Calu3 (cell line): ENCODE measurements at regions of chr2 and their contacts with region 1.

Region 1: GRCh38 chr2:207769597-207770486 is at the start of gene FZD5:
- DNase-seq: peak; percentile 99
- H3K4me3 Mint-ChIP-seq: peak within 1 kb of the TSS; percentile 82
- H3K27ac Mint-ChIP-seq: peak within 1 kb of the TSS; percentile 83
- H3K4me1 Mint-ChIP-seq: peaks cover 37% of the 10 kb centered on the region
- H3K27me3 Mint-ChIP-seq: no peaks in the 10 kb centered on the region
- CTCF ChIP-seq: peak; percentile 80
- total RNA-seq, gene FZD5: 20.4 and 22.2 TPM in 2 replicates

Region 2: DNA sequence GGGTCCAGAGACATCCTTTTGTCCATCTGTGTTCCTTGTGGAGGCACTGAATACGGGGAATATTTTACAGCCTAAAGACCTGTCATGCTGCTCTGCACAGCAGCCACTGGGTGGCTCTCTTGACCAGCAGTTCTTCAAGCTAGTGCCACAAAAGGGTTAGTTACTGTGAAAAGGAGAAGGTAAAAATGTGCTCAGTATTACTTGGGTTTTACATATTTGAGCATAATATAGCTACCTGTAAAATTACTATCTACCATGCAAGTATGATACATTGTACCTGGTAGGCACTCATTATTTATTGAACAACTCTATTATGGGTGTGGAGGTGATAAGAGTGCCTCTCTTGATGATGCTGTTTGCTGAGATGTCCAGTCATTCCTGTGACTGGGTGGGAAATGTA is 23.7 kb before region 1 on chr2:
- CTCF ChIA-PET with region 1: interaction called, 12 read pairs
- intact Hi-C with region 1: no loop called
- DNase-seq: peak; percentile 59
- H3K4me3 Mint-ChIP-seq: no peak overlapping the region
- H3K27ac Mint-ChIP-seq: no peak overlapping the region
- H3K4me1 Mint-ChIP-seq: no peaks in the 10 kb centered on the region
- H3K27me3 Mint-ChIP-seq: no peaks in the 10 kb centered on the region
- CTCF ChIP-seq: peak; percentile 75

Region 3: GRCh38 chr2:207836521-207837133 is 66.8 kb after region 1 on chr2:
- CTCF ChIA-PET with region 1: no interaction called
- intact Hi-C with region 1: no loop called
- DNase-seq: no peak
- H3K4me3 Mint-ChIP-seq: no peak overlapping the region
- H3K27ac Mint-ChIP-seq: no peak overlapping the region
- H3K4me1 Mint-ChIP-seq: peaks cover 6% of the 10 kb centered on the region
- H3K27me3 Mint-ChIP-seq: no peaks in the 10 kb centered on the region
- CTCF ChIP-seq: no peak

Region 4: DNA sequence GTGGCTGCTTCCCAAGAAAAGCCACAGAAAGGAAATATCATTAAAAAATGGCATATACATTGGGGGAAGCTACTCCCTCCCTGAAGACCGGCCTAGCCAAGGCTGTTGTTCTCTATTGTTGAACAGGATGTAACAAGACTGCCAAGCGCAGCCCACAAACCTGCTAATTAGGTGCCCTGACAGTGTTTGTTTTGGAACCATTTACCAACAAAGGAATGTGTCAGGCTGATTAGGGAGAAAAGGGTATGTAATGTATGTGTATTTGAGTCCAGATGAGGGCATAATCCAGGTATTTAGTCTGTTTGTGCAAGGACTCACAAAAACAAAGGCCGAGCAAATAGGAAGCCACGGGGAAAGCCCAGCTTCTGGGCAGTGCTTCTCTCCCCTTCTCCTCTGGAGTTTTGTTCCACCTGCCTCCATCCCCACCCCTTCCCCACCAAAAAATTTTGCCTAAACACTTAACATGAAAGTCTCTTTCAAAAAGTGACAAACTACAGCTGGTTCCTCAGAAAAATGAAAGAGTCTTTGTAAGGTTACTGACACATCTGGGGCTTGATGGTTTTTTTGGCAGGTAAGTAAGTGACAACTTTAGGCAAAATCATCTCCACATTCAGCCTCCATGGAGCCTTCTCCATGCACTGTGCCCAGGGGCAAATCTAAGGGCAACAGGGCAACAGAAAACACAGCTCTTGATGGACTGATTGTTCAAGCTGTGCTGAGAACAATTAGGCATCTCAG is 78.1 kb after region 1 on chr2:
- CTCF ChIA-PET with region 1: no interaction called
- intact Hi-C with region 1: loop called (anchors 1 kb)
- DNase-seq: peak; percentile 74
- H3K4me3 Mint-ChIP-seq: peak overlapping the region; percentile 14
- H3K27ac Mint-ChIP-seq: peak overlapping the region; percentile 71
- H3K4me1 Mint-ChIP-seq: peaks cover 34% of the 10 kb centered on the region
- H3K27me3 Mint-ChIP-seq: no peaks in the 10 kb centered on the region
- CTCF ChIP-seq: no peak

Region 5: DNA sequence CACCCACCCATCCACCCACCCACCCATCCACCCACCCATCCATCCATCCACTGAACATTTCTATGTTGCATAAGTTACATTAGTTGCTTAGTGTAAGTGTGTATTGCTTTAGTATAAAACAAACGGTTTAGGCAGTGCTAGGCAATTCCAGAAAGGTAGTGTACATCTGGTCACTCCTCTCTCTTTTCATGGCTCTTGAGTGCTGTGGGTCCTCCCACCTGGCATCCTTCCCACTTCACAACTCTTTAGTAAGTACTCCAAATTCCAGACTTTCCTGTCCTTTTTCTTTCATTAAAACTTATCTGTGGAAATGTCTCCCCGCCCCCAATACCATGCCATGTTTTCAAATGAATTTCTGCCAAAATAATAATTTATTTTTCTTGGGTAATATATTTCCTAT is 133.0 kb after region 1 on chr2:
- CTCF ChIA-PET with region 1: interaction called, 6 read pairs
- intact Hi-C with region 1: loop called (anchors 5 kb)
- DNase-seq: no peak
- H3K4me3 Mint-ChIP-seq: no peak overlapping the region
- H3K27ac Mint-ChIP-seq: no peak overlapping the region
- H3K4me1 Mint-ChIP-seq: peaks cover 42% of the 10 kb centered on the region
- H3K27me3 Mint-ChIP-seq: no peaks in the 10 kb centered on the region
- CTCF ChIP-seq: no peak

Region 6: GRCh38 chr2:208033758-208034502 is 264.1 kb after region 1 on chr2:
- CTCF ChIA-PET with region 1: interaction called, 8 read pairs
- intact Hi-C with region 1: loop called (anchors 2 kb)
- DNase-seq: peak; percentile 78
- H3K4me3 Mint-ChIP-seq: no peak overlapping the region
- H3K27ac Mint-ChIP-seq: peak overlapping the region; percentile 55
- H3K4me1 Mint-ChIP-seq: peaks cover 14% of the 10 kb centered on the region
- H3K27me3 Mint-ChIP-seq: no peaks in the 10 kb centered on the region
- CTCF ChIP-seq: peak; percentile 43